ENCODE measurements at regions of chr7 and their contacts with region 1.

Region 1: DNA sequence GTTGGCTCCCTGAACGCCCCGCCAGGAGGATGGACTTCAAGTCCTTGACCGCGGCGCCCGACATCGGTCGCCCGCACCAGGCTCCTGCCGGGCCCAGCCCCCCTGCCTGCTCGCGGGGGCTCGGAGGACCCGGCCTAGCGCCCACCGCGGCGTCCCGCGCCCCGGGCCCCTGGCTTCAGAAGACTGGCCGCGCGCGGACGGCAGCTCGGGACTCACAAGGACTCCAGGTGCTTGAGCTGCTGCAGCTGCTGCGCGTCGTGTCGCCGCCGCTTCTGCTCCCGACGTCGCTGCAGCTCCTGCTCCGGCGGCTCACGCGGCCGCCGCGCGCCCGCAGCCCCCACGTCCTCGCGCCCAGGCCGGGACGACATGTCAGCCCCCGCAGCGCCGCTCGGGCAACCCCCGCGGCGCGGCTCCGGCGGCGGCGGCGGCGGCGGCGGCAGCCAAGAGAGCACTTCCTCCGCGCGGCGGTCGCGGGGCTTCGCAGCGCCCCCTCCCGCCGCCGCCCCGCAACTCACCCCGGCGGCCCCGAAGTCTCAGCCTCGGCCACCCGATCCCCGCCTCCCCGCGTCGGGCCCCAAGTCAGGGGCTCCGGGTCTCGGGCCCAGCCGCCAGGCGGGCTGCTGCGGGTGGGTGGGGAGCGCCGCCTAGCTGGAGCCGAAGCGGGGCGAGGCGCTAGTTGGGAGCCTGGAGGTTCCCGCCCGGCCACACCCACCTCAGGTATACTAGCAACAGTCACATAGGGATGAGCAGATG is at the start of gene RP9:
- DNase-seq: peak; percentile 74 to 83 (median 78)
- H3K4me3 ChIP-seq: peak within 1 kb of the TSS; percentile 25 to 59
- H3K4me3 Mint-ChIP-seq: peak within 1 kb of the TSS; percentile 78 to 95 (median 86)
- H3K27ac ChIP-seq: peak within 1 kb of the TSS; percentile 80
- H3K27ac Mint-ChIP-seq: peak within 1 kb of the TSS; percentile 49 to 93 (median 81)
- H3K4me1 ChIP-seq: peaks cover 38% of the 10 kb centered on the region
- H3K4me1 Mint-ChIP-seq: peaks cover 21 to 49% (median 36%) of the 10 kb centered on the region in 4 donors
- H3K27me3 ChIP-seq: no peaks in the 10 kb centered on the region
- H3K27me3 Mint-ChIP-seq: peaks cover 6 to 8% of the 10 kb centered on the region in 2 donors
- total RNA-seq, gene RP9: 17.5 to 17.7 TPM

Region 2: DNA sequence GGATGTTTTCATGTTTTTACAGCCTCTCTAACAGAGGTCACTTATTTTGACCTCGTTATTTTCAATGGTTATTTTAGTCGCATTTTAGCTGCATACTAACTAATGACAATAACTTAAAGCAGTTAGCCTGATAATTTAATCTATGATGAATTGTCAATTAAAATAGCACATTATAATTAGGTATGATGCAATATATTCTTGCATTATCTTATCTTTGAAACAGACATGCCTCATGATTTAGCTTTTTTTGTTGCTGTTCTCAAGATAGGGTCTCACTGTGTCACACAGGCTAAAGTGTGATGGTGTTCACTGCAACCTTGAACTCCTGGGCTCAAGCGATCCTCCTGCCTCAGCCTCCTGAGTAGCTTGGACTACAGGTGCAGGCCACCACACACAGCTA is 344.0 kb before region 1 on chr7:
- CTCF ChIA-PET with region 1: interaction called, 10 read pairs
- POLR2A ChIA-PET with region 1: no interaction called
- intact Hi-C with region 1: no loop called
- DNase-seq: no peak
- H3K4me3 ChIP-seq: no peak overlapping the region
- H3K4me3 Mint-ChIP-seq: no peak overlapping the region
- H3K27ac ChIP-seq: no peak overlapping the region
- H3K27ac Mint-ChIP-seq: no peak overlapping the region
- H3K4me1 ChIP-seq: no peaks in the 10 kb centered on the region
- H3K4me1 Mint-ChIP-seq: peaks cover 5 to 15% (median 7%) of the 10 kb centered on the region in 4 donors
- H3K27me3 ChIP-seq: peaks cover 4% of the 10 kb centered on the region
- H3K27me3 Mint-ChIP-seq: peaks cover 37 to 42% of the 10 kb centered on the region in 2 donors

Region 3: DNA sequence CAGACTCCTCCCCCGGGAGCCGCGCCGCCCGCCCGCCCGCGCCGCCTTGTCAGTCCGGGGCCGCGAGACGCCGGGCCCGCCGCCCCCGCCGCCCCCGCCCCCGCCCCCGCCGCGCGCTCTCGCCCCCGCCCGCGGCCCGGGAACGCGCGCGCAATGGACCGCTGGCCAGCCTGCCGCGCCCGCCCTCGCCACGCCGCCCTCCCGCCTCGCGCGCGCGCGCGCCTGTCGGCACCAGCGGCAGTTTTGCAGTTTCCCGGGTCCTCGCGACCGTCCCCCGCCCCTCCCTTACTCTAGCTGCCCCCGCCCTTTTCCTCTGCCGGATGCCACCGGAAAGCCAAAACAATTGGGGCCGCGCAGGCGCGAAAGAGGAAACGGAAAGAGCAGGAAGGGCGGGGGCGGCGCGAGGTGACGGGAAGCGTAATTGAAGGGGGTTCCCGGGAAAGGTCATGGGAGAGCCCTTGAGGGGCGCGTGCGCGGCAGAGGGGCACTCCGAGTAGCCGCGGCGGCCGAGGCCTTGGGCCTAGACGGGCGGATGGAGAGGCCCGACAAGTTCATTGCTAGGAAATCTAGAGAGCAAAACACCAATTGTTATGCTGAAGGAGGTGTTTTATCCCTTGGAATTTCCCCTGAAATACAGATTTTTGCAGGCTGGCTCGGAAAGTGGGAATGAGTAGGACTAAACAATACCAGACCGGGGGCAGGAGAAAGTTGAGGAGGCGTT is 217.2 kb before region 1 on chr7:
- CTCF ChIA-PET with region 1: no interaction called
- POLR2A ChIA-PET with region 1: interaction called, 26 read pairs
- intact Hi-C with region 1: loop called (anchors 2 kb)
- DNase-seq: peak; percentile 96 to 98 (median 98)
- H3K4me3 ChIP-seq: peak overlapping the region; percentile 80 to 83
- H3K4me3 Mint-ChIP-seq: peak overlapping the region; percentile 92 to 97 (median 94)
- H3K27ac ChIP-seq: peak overlapping the region; percentile 99
- H3K27ac Mint-ChIP-seq: peak overlapping the region; percentile 95 to 100 (median 99)
- H3K4me1 ChIP-seq: peaks cover 46% of the 10 kb centered on the region
- H3K4me1 Mint-ChIP-seq: peaks cover 37 to 59% (median 47%) of the 10 kb centered on the region in 4 donors
- H3K27me3 ChIP-seq: no peaks in the 10 kb centered on the region
- H3K27me3 Mint-ChIP-seq: no peaks in the 10 kb centered on the region

Region 4: DNA sequence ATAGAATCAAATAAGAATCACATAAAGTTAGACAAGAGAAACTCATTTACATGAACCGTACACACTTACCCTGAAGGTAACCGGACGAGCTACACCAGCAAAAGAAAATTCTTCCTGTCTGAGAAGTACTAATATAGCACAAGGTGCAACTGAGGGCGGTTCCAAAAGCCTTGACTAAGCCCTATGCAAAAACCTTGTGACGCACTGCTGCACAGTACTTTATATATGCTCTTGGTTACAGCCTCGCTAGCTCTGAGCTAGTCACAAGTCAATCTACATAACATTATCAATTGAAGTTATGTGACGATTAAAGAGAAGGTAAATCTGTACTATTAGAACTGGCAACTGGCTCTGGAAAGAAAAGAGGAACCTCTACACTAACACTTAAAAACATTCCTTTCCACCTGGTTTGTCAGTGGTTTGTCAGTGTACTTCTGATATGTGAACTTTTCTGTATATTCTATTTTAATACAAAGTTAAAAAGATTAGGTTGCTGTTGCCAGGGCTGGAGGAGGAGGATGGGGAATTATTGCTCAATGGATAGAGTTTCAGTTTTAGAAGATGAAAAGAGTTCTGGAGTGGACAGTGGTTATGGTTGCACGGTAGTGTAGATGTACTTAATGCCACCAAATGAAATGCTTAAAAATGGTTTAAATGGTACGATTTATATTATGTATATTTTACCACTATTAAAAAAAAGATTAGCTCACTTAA is 68.2 kb before region 1 on chr7:
- CTCF ChIA-PET with region 1: interaction called, 28 read pairs
- POLR2A ChIA-PET with region 1: interaction called, 10 read pairs
- intact Hi-C with region 1: loop called (anchors 1 kb)
- DNase-seq: peak; percentile 70 to 90 (median 81)
- H3K4me3 ChIP-seq: peak overlapping the region; percentile 6 to 52
- H3K4me3 Mint-ChIP-seq: peak overlapping the region; percentile 75 to 92 (median 84)
- H3K27ac ChIP-seq: peak overlapping the region; percentile 64
- H3K27ac Mint-ChIP-seq: peak overlapping the region; percentile 88 to 97 (median 94)
- H3K4me1 ChIP-seq: peaks cover 72% of the 10 kb centered on the region
- H3K4me1 Mint-ChIP-seq: peaks cover 34 to 71% (median 53%) of the 10 kb centered on the region in 4 donors
- H3K27me3 ChIP-seq: no peaks in the 10 kb centered on the region
- H3K27me3 Mint-ChIP-seq: no peaks in the 10 kb centered on the region

Region 5: GRCh38 chr7:33062782-33063443 is 46.3 kb before region 1 on chr7:
- CTCF ChIA-PET with region 1: interaction called, 42 read pairs
- POLR2A ChIA-PET with region 1: interaction called, 23 read pairs
- intact Hi-C with region 1: loop called (anchors 1 kb)
- DNase-seq: peak; percentile 93 to 95 (median 94)
- H3K4me3 ChIP-seq: peak overlapping the region; percentile 75 to 98
- H3K4me3 Mint-ChIP-seq: peak overlapping the region; percentile 95 to 98 (median 96)
- H3K27ac ChIP-seq: peak overlapping the region; percentile 87
- H3K27ac Mint-ChIP-seq: peak overlapping the region; percentile 93 to 99 (median 96)
- H3K4me1 ChIP-seq: peaks cover 40% of the 10 kb centered on the region
- H3K4me1 Mint-ChIP-seq: peaks cover 29 to 48% (median 35%) of the 10 kb centered on the region in 4 donors
- H3K27me3 ChIP-seq: no peaks in the 10 kb centered on the region
- H3K27me3 Mint-ChIP-seq: peaks cover 1 to 2% of the 10 kb centered on the region in 2 donors

Region 6: GRCh38 chr7:33128990-33129805 is 20.0 kb after region 1 on chr7 and contains the start of gene BBS9:
- CTCF ChIA-PET with region 1: interaction called, 25 read pairs
- POLR2A ChIA-PET with region 1: interaction called, 16 read pairs
- intact Hi-C with region 1: loop called (anchors 1 kb)
- DNase-seq: peak; percentile 89 to 93 (median 90)
- H3K4me3 ChIP-seq: peak within 1 kb of the TSS; percentile 74 to 81
- H3K4me3 Mint-ChIP-seq: peak within 1 kb of the TSS; percentile 96 to 98 (median 97)
- H3K27ac ChIP-seq: peak within 1 kb of the TSS; percentile 66
- H3K27ac Mint-ChIP-seq: peak within 1 kb of the TSS; percentile 88 to 97 (median 96)
- H3K4me1 ChIP-seq: peaks cover 15% of the 10 kb centered on the region
- H3K4me1 Mint-ChIP-seq: peaks cover 14 to 27% (median 15%) of the 10 kb centered on the region in 4 donors
- H3K27me3 ChIP-seq: no peaks in the 10 kb centered on the region
- H3K27me3 Mint-ChIP-seq: peaks cover 0 to 4% of the 10 kb centered on the region in 2 donors
- total RNA-seq, gene BBS9: 27.0 to 27.3 TPM

Measured in CD4-positive, alpha-beta memory T cell (primary cell).